Left cardiac atrium (tissue), 4 donors: ENCODE measurements at regions of chr2 and their contacts with region 1.

Region 1: DNA sequence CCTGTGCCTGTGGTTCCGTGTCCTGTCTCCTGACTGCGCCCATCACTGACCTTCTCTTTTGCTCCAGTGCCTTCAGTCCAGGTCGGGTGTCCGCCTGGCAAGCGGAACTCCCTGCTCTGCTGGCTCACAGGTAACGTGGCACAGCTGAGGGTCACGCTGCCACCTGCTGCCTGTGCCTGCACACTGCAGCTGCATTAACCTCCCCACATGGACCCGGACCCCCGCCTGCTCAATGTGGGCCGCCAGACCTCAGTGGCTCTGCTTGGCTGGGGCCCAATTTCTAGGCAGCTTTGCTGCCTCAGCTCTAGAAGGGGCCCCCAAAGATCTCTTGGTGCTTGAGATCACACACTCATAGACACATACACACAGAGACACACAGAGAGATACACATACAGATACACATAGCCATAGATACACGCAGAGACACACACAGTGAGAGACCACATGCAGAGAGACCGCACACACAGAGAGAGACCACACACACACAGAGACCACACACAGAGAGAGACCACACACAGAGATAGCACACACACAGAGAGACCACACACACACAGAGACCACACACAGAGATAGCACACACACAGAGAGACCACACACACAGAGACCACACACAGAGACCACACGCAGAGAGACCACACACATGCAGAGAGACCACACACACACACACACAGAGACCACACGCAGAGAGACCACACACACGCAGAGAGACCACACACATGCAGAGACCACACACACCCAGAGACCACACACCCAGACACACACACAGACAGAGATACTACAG is 14.9 kb upstream of the CNNM3 start:
- DNase-seq: peak; percentile 77
- ATAC-seq: peak; percentile 89 to 90

Region 2: GRCh38 chr2:96760036-96760985 is 40.9 kb before region 1 on chr2 and contains the start of gene CNNM4:
- intact Hi-C with region 1: loop called in 1 of 2 experiments (anchors 10 kb)
- DNase-seq: peak; percentile 96
- ATAC-seq: peak; percentile 96
- total RNA-seq, gene CNNM4: 16.8 to 29.5 TPM